KBM-7 (cell line): ENCODE measurements at regions of chr12 and their contacts with region 1.

Region 1: GRCh38 chr12:121765573-121765972 is 27.9 kb downstream of the RHOF start:
- DNase-seq: no peak

Region 2: DNA sequence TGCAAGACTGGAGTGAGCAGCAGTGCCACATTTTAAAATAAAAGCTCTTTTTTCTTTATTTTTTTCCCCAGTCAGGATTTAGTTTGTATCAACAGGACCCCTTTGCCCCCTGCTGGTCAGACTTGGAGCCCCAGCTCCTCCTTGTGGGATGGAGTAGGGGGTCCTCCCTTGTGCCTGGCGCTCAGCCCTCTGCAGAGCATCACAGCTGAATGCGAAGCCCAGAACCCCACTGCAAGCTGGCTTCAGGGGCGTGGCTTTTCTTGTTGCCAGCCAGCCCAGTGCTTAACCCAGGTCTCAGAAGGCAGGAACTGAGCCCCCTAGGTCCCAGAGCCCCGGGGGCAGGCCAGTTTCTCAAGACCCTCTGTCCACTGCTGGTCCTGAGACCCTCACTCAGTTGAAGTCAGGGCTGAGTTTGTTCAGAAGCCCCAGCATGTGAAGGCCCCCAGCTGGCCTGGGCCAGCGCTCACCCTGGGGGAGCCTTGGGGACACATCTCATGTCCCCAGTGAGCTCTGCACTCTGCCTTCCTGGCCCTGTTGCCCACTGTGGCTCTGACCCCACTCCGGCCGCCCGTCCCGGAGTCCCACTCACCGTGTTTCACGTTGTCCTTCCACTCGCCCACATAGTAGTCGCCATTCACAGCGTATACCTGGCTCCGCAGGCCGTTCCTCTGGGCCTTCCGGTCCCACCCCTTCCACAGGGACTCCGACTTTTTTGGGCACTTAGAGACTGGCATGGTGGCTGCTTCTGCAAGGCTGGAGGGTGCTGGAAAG is 96.6 kb before region 1 on chr12:
- in situ Hi-C with region 1: no loop called
- DNase-seq: peak; percentile 57

Region 3: GRCh38 chr12:121712461-121713256 is 52.9 kb before region 1 on chr12 and contains the start of gene TMEM120B:
- in situ Hi-C with region 1: loop called (anchors 10 kb)
- DNase-seq: peak; percentile 53